CD4-positive, alpha-beta memory T cell (primary cell): ENCODE measurements at regions of chr3 and their contacts with region 1.

Region 1: GRCh38 chr3:142447852-142448823 is at the start of gene XRN1:
- DNase-seq: peak; percentile 94 to 98 (median 95)
- H3K4me3 ChIP-seq: peak within 1 kb of the TSS; percentile 96 to 99
- H3K4me3 Mint-ChIP-seq: peak within 1 kb of the TSS; percentile 98 to 100 (median 99)
- H3K27ac ChIP-seq: peak within 1 kb of the TSS; percentile 100
- H3K27ac Mint-ChIP-seq: peak within 1 kb of the TSS; percentile 99 to 100 (median 100)
- H3K4me1 ChIP-seq: peaks cover 44% of the 10 kb centered on the region
- H3K4me1 Mint-ChIP-seq: peaks cover 27 to 54% (median 41%) of the 10 kb centered on the region in 4 donors
- H3K27me3 ChIP-seq: no peaks in the 10 kb centered on the region
- H3K27me3 Mint-ChIP-seq: no peaks in the 10 kb centered on the region
- total RNA-seq, gene XRN1: 102 to 104 TPM

Region 2: GRCh38 chr3:140941434-140942220 is 1506.5 kb before region 1 on chr3 and contains the start of gene SLC25A36:
- CTCF ChIA-PET with region 1: no interaction called
- POLR2A ChIA-PET with region 1: no interaction called
- intact Hi-C with region 1: loop called (anchors 10 kb)
- DNase-seq: peak; percentile 93 to 97 (median 94)
- H3K4me3 ChIP-seq: peak within 1 kb of the TSS; percentile 64 to 90
- H3K4me3 Mint-ChIP-seq: peak within 1 kb of the TSS; percentile 89 to 99 (median 93)
- H3K27ac ChIP-seq: peak within 1 kb of the TSS; percentile 75
- H3K27ac Mint-ChIP-seq: peak within 1 kb of the TSS; percentile 97 to 100 (median 98)
- H3K4me1 ChIP-seq: peaks cover 28% of the 10 kb centered on the region
- H3K4me1 Mint-ChIP-seq: peaks cover 22 to 54% (median 39%) of the 10 kb centered on the region in 4 donors
- H3K27me3 ChIP-seq: no peaks in the 10 kb centered on the region
- H3K27me3 Mint-ChIP-seq: no peaks in the 10 kb centered on the region
- total RNA-seq, gene SLC25A36: 54.7 to 56.5 TPM

Region 3: DNA sequence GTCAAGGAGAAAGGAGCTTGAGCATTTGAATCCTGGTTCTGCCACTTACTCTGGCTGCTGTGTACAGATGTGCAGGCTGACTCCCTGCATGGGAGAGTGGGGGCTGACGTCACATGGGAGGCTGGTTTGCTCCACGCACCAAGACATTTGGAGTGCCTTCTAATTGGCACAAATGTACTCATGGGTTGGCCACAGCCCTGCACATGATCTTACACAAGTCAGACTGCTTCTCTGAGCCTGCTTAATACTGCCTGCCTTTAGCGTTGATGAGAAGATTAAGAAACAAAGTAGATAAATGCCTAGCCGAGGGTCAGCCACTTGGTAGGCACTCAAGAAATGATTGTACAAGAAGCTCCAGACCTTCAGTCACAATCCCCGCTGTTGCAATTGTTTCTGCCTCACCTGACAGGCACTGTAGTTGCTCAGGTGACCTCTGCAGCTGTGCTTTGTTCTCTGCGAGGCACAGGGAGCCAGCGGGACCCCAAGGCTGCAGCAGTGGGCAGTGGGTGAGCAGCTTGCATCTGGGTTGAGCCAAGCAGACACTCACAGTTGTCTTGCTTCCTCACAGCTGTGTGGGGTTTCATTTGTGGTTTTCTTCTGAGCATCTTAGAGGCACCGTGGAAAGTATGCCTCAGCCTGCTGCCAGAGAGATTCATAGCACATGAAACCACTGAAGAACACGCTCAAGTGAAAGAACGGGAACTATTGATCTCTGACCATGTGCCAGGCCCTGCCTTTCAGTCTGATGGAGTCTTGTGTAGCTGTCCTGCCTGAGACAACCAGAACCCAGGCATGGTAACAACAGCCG is 651.9 kb before region 1 on chr3:
- CTCF ChIA-PET with region 1: no interaction called
- POLR2A ChIA-PET with region 1: no interaction called
- intact Hi-C with region 1: loop called (anchors 5 kb)
- DNase-seq: peak; percentile 61 to 85 (median 66)
- H3K4me3 ChIP-seq: peak overlapping the region; percentile 61 to 76
- H3K4me3 Mint-ChIP-seq: peak overlapping the region; percentile 90 to 96 (median 92)
- H3K27ac ChIP-seq: peak overlapping the region; percentile 65
- H3K27ac Mint-ChIP-seq: peak overlapping the region; percentile 97 to 99 (median 98)
- H3K4me1 ChIP-seq: peaks cover 52% of the 10 kb centered on the region
- H3K4me1 Mint-ChIP-seq: peaks cover 46 to 60% (median 55%) of the 10 kb centered on the region in 4 donors
- H3K27me3 ChIP-seq: no peaks in the 10 kb centered on the region
- H3K27me3 Mint-ChIP-seq: no peaks in the 10 kb centered on the region

Region 4: GRCh38 chr3:142226484-142226883 is 221.7 kb before region 1 on chr3:
- CTCF ChIA-PET with region 1: no interaction called
- POLR2A ChIA-PET with region 1: no interaction called
- intact Hi-C with region 1: loop called (anchors 2 kb)
- DNase-seq: no peak
- H3K4me3 ChIP-seq: no peak overlapping the region
- H3K4me3 Mint-ChIP-seq: peak overlapping the region; percentile 34 to 93 (median 62)
- H3K27ac ChIP-seq: no peak overlapping the region
- H3K27ac Mint-ChIP-seq: peak overlapping the region in 1 of 7 donors; percentile 81
- H3K4me1 ChIP-seq: peaks cover 12% of the 10 kb centered on the region
- H3K4me1 Mint-ChIP-seq: peaks cover 8 to 18% (median 12%) of the 10 kb centered on the region in 4 donors
- H3K27me3 ChIP-seq: no peaks in the 10 kb centered on the region
- H3K27me3 Mint-ChIP-seq: no peaks in the 10 kb centered on the region

Region 5: DNA sequence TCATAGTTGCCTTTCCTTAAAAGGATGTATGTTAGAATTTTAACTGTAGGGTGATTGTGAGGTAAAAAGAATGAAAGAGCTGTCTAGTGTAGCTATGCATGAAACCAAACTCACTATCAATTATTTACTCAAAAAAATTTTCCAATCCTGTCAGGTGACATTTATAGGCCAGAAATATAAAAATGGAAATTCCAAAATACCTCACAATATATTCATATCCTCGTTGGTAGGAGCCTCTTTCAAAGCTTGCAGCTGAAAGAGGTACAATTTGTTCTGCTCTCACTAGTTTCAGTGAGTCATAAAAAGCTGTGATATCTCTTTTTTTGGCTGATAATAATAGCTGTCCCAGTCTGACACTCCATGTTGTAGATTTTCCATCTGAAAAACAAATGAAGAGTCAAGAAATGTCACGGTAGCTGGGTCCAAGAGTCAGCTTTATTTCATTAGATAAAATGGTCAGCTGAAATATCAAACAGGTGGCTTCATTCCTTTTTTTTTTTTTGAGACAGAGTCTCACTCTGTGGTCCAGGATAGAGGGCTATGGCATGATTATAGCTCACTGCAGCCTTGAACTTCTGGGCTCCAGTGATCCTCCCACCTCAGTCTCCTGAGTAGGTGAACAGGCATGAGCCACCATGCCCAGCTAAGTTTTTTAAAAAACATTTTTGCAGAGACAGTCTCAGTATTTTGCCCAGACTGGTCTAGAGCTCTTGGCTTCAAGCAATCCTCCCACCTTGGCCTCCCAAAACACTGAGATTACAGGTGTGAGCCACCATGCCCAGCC is 50.5 kb after region 1 on chr3:
- CTCF ChIA-PET with region 1: no interaction called
- POLR2A ChIA-PET with region 1: no interaction called
- intact Hi-C with region 1: no loop called
- DNase-seq: no peak
- H3K4me3 ChIP-seq: no peak overlapping the region
- H3K4me3 Mint-ChIP-seq: no peak overlapping the region
- H3K27ac ChIP-seq: no peak overlapping the region
- H3K27ac Mint-ChIP-seq: no peak overlapping the region
- H3K4me1 ChIP-seq: no peaks in the 10 kb centered on the region
- H3K4me1 Mint-ChIP-seq: peaks cover 0 to 2% (median 0%) of the 10 kb centered on the region in 4 donors
- H3K27me3 ChIP-seq: no peaks in the 10 kb centered on the region
- H3K27me3 Mint-ChIP-seq: no peaks in the 10 kb centered on the region

Region 6: GRCh38 chr3:142578327-142579223 is 130.4 kb after region 1 on chr3 and contains the start of gene ATR:
- CTCF ChIA-PET with region 1: no interaction called
- POLR2A ChIA-PET with region 1: interaction called, 5 read pairs
- intact Hi-C with region 1: loop called (anchors 2 kb)
- DNase-seq: peak; percentile 95 to 96 (median 96)
- H3K4me3 ChIP-seq: peak within 1 kb of the TSS; percentile 90 to 100
- H3K4me3 Mint-ChIP-seq: peak within 1 kb of the TSS; percentile 93 to 99 (median 98)
- H3K27ac ChIP-seq: peak within 1 kb of the TSS; percentile 94
- H3K27ac Mint-ChIP-seq: peak within 1 kb of the TSS; percentile 91 to 99 (median 99)
- H3K4me1 ChIP-seq: peaks cover 44% of the 10 kb centered on the region
- H3K4me1 Mint-ChIP-seq: peaks cover 41 to 66% (median 52%) of the 10 kb centered on the region in 4 donors
- H3K27me3 ChIP-seq: no peaks in the 10 kb centered on the region
- H3K27me3 Mint-ChIP-seq: peaks cover 2 to 4% of the 10 kb centered on the region in 2 donors
- total RNA-seq, gene ATR: 42.3 to 45.6 TPM

Region 7: DNA sequence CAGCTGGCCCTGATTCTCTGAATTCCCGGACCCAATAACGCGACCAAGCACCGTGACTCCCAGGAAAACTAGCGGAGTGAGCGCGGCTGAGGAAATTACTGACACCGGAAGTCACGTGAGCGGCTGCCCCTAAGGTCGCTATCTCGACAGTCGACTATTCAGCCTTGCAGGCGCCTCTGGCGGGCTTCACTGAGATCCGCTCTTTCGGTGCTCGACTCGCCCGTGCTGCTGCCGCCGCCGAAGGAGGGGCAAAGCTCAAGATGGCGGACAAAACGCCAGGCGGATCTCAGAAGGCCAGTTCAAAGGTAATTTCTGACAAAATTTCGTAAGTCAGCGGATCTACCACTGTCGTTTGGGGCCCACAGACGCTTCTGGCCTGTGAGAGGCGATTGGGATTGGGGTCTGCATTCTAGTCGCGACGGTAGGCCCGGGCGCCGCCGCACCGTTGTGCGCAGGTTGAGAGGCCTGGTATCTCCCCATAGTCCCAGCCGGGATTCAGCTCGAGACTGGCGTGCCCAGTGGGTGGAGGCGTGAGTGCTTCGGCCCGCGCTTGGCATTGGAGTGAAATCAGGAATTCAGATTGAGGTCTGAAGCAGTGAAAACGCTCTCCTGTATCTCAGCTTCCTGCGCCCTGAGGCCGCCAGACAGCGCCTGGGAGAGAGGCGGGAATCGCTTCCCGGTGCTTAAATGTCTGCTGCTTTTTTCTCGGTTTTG is 553.4 kb after region 1 on chr3 and contains the start of gene U2SURP:
- CTCF ChIA-PET with region 1: interaction called, 3 read pairs
- POLR2A ChIA-PET with region 1: interaction called, 28 read pairs
- intact Hi-C with region 1: loop called (anchors 1 kb)
- DNase-seq: peak; percentile 88 to 96 (median 92)
- H3K4me3 ChIP-seq: peak within 1 kb of the TSS; percentile 82 to 100
- H3K4me3 Mint-ChIP-seq: peak within 1 kb of the TSS; percentile 97 to 100 (median 99)
- H3K27ac ChIP-seq: peak within 1 kb of the TSS; percentile 95
- H3K27ac Mint-ChIP-seq: peak within 1 kb of the TSS; percentile 97 to 100 (median 100)
- H3K4me1 ChIP-seq: peaks cover 49% of the 10 kb centered on the region
- H3K4me1 Mint-ChIP-seq: peaks cover 28 to 57% (median 38%) of the 10 kb centered on the region in 4 donors
- H3K27me3 ChIP-seq: no peaks in the 10 kb centered on the region
- H3K27me3 Mint-ChIP-seq: peaks cover 0 to 2% of the 10 kb centered on the region in 2 donors
- total RNA-seq, gene U2SURP: 137 TPM

Region 8: DNA sequence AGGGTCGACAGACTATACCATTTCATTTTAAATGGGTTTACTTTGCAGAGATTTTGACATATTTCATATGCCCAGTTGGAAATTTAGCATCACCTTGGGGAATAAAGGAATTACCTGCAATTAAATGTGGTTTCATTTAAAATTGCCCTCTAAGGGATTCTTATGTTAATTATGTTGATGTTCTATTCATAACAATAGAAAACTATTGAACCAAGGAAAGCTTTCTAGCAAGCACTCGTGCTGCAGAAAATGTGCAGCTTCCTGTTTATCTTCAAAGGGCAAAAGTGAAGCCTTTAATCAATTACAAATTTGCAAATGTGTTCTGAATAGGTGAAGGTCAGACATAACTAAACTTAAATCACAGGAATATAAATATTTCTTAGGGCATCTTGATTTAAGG is 1023.6 kb after region 1 on chr3:
- CTCF ChIA-PET with region 1: no interaction called
- POLR2A ChIA-PET with region 1: no interaction called
- intact Hi-C with region 1: no loop called
- DNase-seq: no peak
- H3K4me3 ChIP-seq: no peak overlapping the region
- H3K4me3 Mint-ChIP-seq: no peak overlapping the region
- H3K27ac ChIP-seq: no peak overlapping the region
- H3K27ac Mint-ChIP-seq: no peak overlapping the region
- H3K4me1 ChIP-seq: no peaks in the 10 kb centered on the region
- H3K4me1 Mint-ChIP-seq: peaks cover 0 to 9% (median 4%) of the 10 kb centered on the region in 4 donors
- H3K27me3 ChIP-seq: no peaks in the 10 kb centered on the region
- H3K27me3 Mint-ChIP-seq: no peaks in the 10 kb centered on the region